ENCODE measurements at regions of chr1 and their contacts with region 1.

Region 1: GRCh38 chr1:84668185-84668584 is 22.1 kb downstream of the SSX2IP start:
- DNase-seq: no peak
- H3K4me3 ChIP-seq: no peak overlapping the region
- H3K27ac ChIP-seq: no peak overlapping the region
- H3K4me1 ChIP-seq: no peaks in the 10 kb centered on the region
- H3K27me3 ChIP-seq: no peaks in the 10 kb centered on the region
- CTCF ChIP-seq: no peak

Region 2: DNA sequence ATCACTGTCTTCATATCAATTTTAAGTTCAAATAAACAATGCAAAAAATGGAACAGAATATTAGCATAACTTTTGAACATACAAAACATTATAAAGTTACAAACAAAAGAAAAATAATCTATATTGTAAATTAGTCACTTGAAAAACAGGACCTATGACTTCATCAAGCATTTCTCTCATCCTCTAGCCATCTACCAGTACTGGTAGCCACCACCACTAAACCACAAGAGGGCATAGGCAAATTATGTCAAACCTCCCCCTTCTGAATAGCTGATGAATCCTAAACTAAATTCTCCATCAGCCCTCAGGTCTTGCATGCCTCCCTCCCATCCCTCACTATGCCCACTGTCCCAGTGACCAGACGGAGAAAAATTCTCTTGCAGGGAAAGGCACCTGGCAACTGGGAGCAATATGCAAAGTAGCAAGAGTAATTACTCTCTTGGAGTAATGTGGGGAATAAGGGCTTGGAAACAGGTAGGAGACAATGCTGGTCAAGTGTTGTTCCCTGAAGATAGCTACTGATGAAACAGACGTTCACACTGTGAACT is 15.0 kb before region 1 on chr1:
- intact Hi-C with region 1: no loop called
- DNase-seq: no peak
- H3K4me3 ChIP-seq: no peak overlapping the region
- H3K27ac ChIP-seq: no peak overlapping the region
- H3K4me1 ChIP-seq: no peaks in the 10 kb centered on the region
- H3K27me3 ChIP-seq: no peaks in the 10 kb centered on the region
- CTCF ChIP-seq: no peak

Region 3: DNA sequence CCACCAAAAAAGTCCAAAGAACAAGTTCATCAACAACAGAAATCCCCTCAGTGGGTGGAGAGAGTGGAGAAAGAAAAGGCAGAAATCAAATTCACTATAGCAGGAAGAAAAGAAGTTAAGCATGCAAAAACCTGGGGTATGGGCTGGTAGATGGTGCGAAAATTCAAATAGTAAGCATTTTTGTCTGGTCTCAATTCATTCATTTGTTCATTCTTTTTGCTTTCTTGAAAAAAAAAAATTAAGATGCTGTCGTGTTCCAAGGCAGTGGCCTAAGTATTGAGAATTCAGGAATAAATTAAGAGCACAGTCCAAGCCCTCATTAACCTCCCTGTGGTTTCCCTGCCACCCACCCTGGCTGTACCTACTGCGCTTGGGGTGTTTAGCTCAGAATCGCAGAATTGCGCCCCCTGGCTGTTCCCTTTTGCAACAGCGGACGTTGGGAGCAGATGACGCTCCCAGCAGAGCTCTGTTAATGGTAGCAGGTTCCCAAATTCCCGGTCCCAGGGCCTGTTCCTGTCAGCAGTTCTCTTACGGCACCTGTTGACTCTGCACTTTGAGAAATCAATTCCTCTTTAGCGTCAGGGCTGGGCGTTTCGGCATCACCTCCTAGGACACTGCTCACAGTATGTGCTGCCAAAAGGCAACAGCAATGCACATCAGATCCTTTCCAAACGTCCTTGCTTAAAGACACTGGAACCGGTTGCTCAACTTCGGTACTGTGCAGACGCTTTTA is 56.1 kb after region 1 on chr1:
- intact Hi-C with region 1: loop called (anchors 5 kb)
- DNase-seq: no peak
- H3K4me3 ChIP-seq: no peak overlapping the region
- H3K27ac ChIP-seq: no peak overlapping the region
- H3K4me1 ChIP-seq: peaks cover 11% of the 10 kb centered on the region
- H3K27me3 ChIP-seq: no peaks in the 10 kb centered on the region
- CTCF ChIP-seq: no peak

Measured in colonic mucosa (tissue), 4 donors.